GM12878 (cell line): ENCODE measurements at regions of chr17 and their contacts with region 1.

Region 1: GRCh38 chr17:51153210-51154072 is at the start of gene NME1:
- DNase-seq: peak; percentile 99
- ATAC-seq: peak; percentile 93
- H3K4me3 ChIP-seq: peak within 1 kb of the TSS; percentile 90
- H3K27ac ChIP-seq: peak within 1 kb of the TSS; percentile 84
- H3K4me1 ChIP-seq: peaks cover 7% of the 10 kb centered on the region
- H3K27me3 ChIP-seq: no peaks in the 10 kb centered on the region
- CTCF ChIP-seq: peak; percentile 84 to 98 (median 95)
- EP300 ChIP-seq: peak in 1 of 2 experiments; percentile 40; a peak in 1 of 4 replicates
- POLR2A ChIP-seq: peak; percentile 90
- RAD21 ChIP-seq: peak; percentile 97
- polyA plus RNA-seq, gene NME1: 1,138 to 1,362 TPM

Region 2: GRCh38 chr17:51000835-51001638 is 152.4 kb before region 1 on chr17:
- CTCF ChIA-PET with region 1: interaction called, 103 read pairs
- POLR2A ChIA-PET with region 1: interaction called, 6 read pairs
- RAD21 ChIA-PET with region 1: interaction called, 35 read pairs
- SMC1A ChIA-PET with region 1: interaction called, 64 read pairs
- in situ Hi-C with region 1: loop called (anchors 5 kb)
- intact Hi-C with region 1: loop called (anchors 1 kb)
- DNase-seq: peak; percentile 27
- ATAC-seq: peak; percentile 82
- H3K4me3 ChIP-seq: no peak overlapping the region
- H3K27ac ChIP-seq: no peak overlapping the region
- H3K4me1 ChIP-seq: no peaks in the 10 kb centered on the region
- H3K27me3 ChIP-seq: no peaks in the 10 kb centered on the region
- CTCF ChIP-seq: peak; percentile 23 to 62 (median 46); a peak in 4 of 6 replicates
- EP300 ChIP-seq: no peak
- POLR2A ChIP-seq: no peak
- RAD21 ChIP-seq: peak; percentile 86

Region 3: GRCh38 chr17:51015145-51015558 is 138.3 kb before region 1 on chr17:
- CTCF ChIA-PET with region 1: interaction called, 11 read pairs
- POLR2A ChIA-PET with region 1: no interaction called
- RAD21 ChIA-PET with region 1: interaction called, 3 read pairs
- SMC1A ChIA-PET with region 1: interaction called, 5 read pairs
- in situ Hi-C with region 1: no loop called
- intact Hi-C with region 1: no loop called
- DNase-seq: no peak
- ATAC-seq: no peak
- H3K4me3 ChIP-seq: no peak overlapping the region
- H3K27ac ChIP-seq: peak overlapping the region; percentile 42; the same call in 1 of the 2 replicates
- H3K4me1 ChIP-seq: no peaks in the 10 kb centered on the region
- H3K27me3 ChIP-seq: no peaks in the 10 kb centered on the region
- CTCF ChIP-seq: no peak
- EP300 ChIP-seq: no peak
- POLR2A ChIP-seq: no peak
- RAD21 ChIP-seq: no peak

Region 4: GRCh38 chr17:51115179-51115578 is 38.3 kb before region 1 on chr17:
- CTCF ChIA-PET with region 1: interaction called, 17 read pairs
- POLR2A ChIA-PET with region 1: interaction called, 15 read pairs
- RAD21 ChIA-PET with region 1: interaction called, 15 read pairs
- SMC1A ChIA-PET with region 1: interaction called, 16 read pairs
- in situ Hi-C with region 1: no loop called
- intact Hi-C with region 1: no loop called
- DNase-seq: no peak
- ATAC-seq: no peak
- H3K4me3 ChIP-seq: no peak overlapping the region
- H3K27ac ChIP-seq: no peak overlapping the region; the same call in 1 of the 2 replicates
- H3K4me1 ChIP-seq: peaks cover 10% of the 10 kb centered on the region; the same call in 1 of the 2 replicates
- H3K27me3 ChIP-seq: no peaks in the 10 kb centered on the region
- CTCF ChIP-seq: no peak
- EP300 ChIP-seq: no peak
- POLR2A ChIP-seq: no peak
- RAD21 ChIP-seq: no peak

Region 5: GRCh38 chr17:51166197-51166986 is 13.0 kb after region 1 on chr17 and contains the start of gene NME2:
- CTCF ChIA-PET with region 1: interaction called, 35 read pairs
- POLR2A ChIA-PET with region 1: interaction called, 3 read pairs
- RAD21 ChIA-PET with region 1: interaction called, 4 read pairs
- SMC1A ChIA-PET with region 1: interaction called, 6 read pairs
- in situ Hi-C with region 1: no loop called
- intact Hi-C with region 1: no loop called
- DNase-seq: peak; percentile 40
- ATAC-seq: peak; percentile 93
- H3K4me3 ChIP-seq: peak within 1 kb of the TSS; percentile 96
- H3K27ac ChIP-seq: peak within 1 kb of the TSS; percentile 92
- H3K4me1 ChIP-seq: peaks cover 12% of the 10 kb centered on the region
- H3K27me3 ChIP-seq: no peaks in the 10 kb centered on the region
- CTCF ChIP-seq: no peak; a peak in 1 of 6 replicates
- EP300 ChIP-seq: no peak
- POLR2A ChIP-seq: peak; percentile 69
- RAD21 ChIP-seq: no peak
- polyA plus RNA-seq, gene NME2: 497 to 881 TPM

Region 6: GRCh38 chr17:51238255-51238887 is 84.9 kb after region 1 on chr17:
- CTCF ChIA-PET with region 1: no interaction called
- POLR2A ChIA-PET with region 1: no interaction called
- RAD21 ChIA-PET with region 1: no interaction called
- SMC1A ChIA-PET with region 1: no interaction called
- in situ Hi-C with region 1: no loop called
- intact Hi-C with region 1: no loop called
- DNase-seq: peak; percentile 40
- ATAC-seq: peak; percentile 97
- H3K4me3 ChIP-seq: peak overlapping the region; percentile 28; the same call in 1 of the 2 replicates
- H3K27ac ChIP-seq: peak overlapping the region; percentile 70
- H3K4me1 ChIP-seq: peaks cover 10% of the 10 kb centered on the region
- H3K27me3 ChIP-seq: no peaks in the 10 kb centered on the region
- CTCF ChIP-seq: no peak
- EP300 ChIP-seq: no peak
- POLR2A ChIP-seq: no peak
- RAD21 ChIP-seq: no peak